ENCODE measurements at regions of chr7 and their contacts with region 1.

Region 1: DNA sequence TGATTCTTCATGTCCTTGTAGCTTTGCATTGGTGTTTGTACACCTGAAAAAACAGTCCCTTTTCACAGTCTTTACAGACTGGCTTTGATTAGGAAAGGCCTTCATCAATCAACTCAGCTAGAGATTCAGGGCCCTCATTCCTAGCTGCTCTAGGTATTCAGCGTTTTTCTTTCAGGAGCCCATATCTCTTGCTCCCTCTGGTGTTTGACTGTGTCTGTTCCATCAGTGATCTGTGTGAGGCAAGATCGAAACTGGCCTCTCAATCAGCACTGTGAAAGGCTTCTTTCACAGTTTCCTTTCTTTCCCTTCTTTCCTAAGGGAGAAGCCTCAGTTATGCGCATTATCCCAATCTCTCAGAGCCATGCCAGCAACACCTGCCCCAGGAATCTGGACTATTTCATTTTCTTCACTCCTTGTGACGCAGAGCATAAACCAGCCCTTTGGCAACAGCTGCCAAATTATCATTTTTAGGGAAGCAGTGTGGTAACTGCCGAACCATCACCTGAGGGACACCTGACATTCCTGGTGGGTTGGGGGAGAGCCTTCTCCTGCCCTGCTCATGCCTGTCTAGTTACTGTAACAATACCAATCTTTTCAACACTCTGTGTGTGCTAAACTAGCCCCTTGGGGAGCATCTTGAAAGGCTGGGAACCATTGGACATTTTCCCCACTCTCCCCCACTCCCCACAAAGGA is 75.7 kb upstream of the CCDC71L start:
- DNase-seq: peak; percentile 56
- ATAC-seq: peak; percentile 94
- H3K4me3 Mint-ChIP-seq: no peak overlapping the region
- H3K27ac Mint-ChIP-seq: peak overlapping the region; percentile 63
- H3K4me1 Mint-ChIP-seq: peaks cover 28% of the 10 kb centered on the region
- H3K27me3 Mint-ChIP-seq: no peaks in the 10 kb centered on the region
- CTCF ChIP-seq: peak; percentile 74

Region 2: GRCh38 chr7:106542550-106543220 is 194.0 kb before region 1 on chr7:
- CTCF ChIA-PET with region 1: interaction called, 32 read pairs
- POLR2A ChIA-PET with region 1: no interaction called
- intact Hi-C with region 1: loop called (anchors 5 kb)
- DNase-seq: peak; percentile 70
- ATAC-seq: peak; percentile 86
- H3K4me3 Mint-ChIP-seq: no peak overlapping the region
- H3K27ac Mint-ChIP-seq: no peak overlapping the region
- H3K4me1 Mint-ChIP-seq: peaks cover 8% of the 10 kb centered on the region
- H3K27me3 Mint-ChIP-seq: peaks cover 3% of the 10 kb centered on the region
- CTCF ChIP-seq: peak; percentile 60

Region 3: GRCh38 chr7:106679153-106679931 is 57.3 kb before region 1 on chr7:
- CTCF ChIA-PET with region 1: interaction called, 11 read pairs
- POLR2A ChIA-PET with region 1: no interaction called
- intact Hi-C with region 1: no loop called
- DNase-seq: peak; percentile 64
- ATAC-seq: peak; percentile 97
- H3K4me3 Mint-ChIP-seq: no peak overlapping the region
- H3K27ac Mint-ChIP-seq: peak overlapping the region; percentile 0
- H3K4me1 Mint-ChIP-seq: peaks cover 11% of the 10 kb centered on the region
- H3K27me3 Mint-ChIP-seq: no peaks in the 10 kb centered on the region
- CTCF ChIP-seq: no peak

Region 4: GRCh38 chr7:106704000-106704840 is 32.4 kb before region 1 on chr7:
- CTCF ChIA-PET with region 1: interaction called, 15 read pairs
- POLR2A ChIA-PET with region 1: no interaction called
- intact Hi-C with region 1: no loop called
- DNase-seq: peak; percentile 26
- ATAC-seq: peak; percentile 79
- H3K4me3 Mint-ChIP-seq: no peak overlapping the region
- H3K27ac Mint-ChIP-seq: peak overlapping the region; percentile 49
- H3K4me1 Mint-ChIP-seq: peaks cover 15% of the 10 kb centered on the region
- H3K27me3 Mint-ChIP-seq: no peaks in the 10 kb centered on the region
- CTCF ChIP-seq: no peak

Region 5: GRCh38 chr7:106767498-106768323 is 31.1 kb after region 1 on chr7:
- CTCF ChIA-PET with region 1: interaction called, 14 read pairs
- POLR2A ChIA-PET with region 1: no interaction called
- intact Hi-C with region 1: no loop called
- DNase-seq: no peak
- ATAC-seq: peak; percentile 53
- H3K4me3 Mint-ChIP-seq: peak overlapping the region; percentile 34
- H3K27ac Mint-ChIP-seq: peak overlapping the region; percentile 86
- H3K4me1 Mint-ChIP-seq: peaks cover 49% of the 10 kb centered on the region
- H3K27me3 Mint-ChIP-seq: no peaks in the 10 kb centered on the region
- CTCF ChIP-seq: no peak